HCT116 (cell line): ENCODE measurements at regions of chr14 and their contacts with region 1.

Region 1: DNA sequence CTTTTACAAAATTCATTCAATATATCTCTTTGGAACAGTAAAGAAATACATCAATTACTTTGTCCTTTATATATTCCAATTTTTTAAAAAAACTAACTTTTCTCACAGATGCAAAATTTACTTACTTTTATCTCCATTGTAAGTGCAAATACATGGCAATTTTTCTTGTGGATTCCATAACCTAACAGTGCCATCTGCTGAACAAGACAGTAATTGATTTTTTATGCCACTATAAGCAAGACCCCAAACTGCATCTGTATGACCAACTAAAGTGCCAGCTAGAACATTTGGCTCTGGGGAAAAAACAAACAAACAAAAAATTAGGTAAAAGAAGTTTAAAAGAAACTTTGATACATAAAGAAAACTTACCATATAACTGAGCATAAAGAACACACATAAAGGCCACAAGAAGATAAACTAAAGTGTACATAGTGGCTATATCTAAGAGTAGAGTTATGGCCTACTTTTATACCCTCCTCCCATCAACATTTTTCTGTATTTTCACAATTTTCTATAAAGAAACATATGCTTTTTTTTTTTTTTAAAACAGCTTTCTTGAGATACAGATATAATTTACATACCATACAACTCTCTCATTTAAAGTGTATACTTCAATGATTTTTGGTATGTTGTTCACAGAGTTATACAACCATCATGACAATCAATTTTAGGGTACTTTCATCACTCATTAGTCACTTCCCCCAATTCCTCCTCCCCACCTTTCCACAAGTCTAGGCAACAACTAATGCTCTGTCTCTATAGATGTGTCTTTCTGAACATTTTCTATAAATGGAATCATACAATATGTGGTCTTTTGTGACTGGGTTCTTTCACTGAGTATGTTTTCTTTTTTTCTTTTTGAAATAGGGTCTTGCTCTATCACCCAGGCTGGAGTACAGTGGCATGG is 32.6 kb downstream of the COCH start:
- DNase-seq: peak; percentile 12
- ATAC-seq: no peak
- H3K4me3 ChIP-seq: no peak overlapping the region
- H3K27ac ChIP-seq: no peak overlapping the region
- H3K4me1 ChIP-seq: no peaks in the 10 kb centered on the region
- H3K27me3 ChIP-seq: no peaks in the 10 kb centered on the region
- CTCF ChIP-seq: peak; percentile 5 to 55 (median 27); a peak in 4 of 6 replicates
- POLR2A ChIP-seq: no peak
- RAD21 ChIP-seq: peak; percentile 41; the same call in 1 of the 2 replicates

Region 2: DNA sequence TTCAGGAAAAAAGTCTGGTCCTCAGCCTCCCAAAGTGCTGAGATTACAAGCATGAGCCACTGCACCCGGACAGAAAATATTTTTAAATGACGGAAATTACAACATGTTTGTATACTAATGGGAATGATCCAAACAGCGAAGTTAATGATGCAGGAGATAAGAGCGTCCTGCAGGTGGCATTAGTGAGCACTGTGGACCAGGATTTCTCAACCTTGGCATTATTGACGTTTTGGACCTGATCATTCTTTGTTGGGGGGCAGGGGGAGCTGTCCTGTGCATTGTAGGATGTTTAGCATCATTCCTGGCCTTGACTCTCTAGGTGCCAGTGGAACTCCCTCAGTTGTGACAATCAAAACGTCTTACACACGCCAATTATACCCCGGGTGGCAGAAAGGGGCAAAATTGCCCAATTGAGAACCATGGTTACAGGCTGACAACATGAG is 250.8 kb before region 1 on chr14:
- CTCF ChIA-PET with region 1: no interaction called
- POLR2A ChIA-PET with region 1: no interaction called
- RAD21 ChIA-PET with region 1: interaction called in 1 of 2 experiments, 4 read pairs
- intact Hi-C with region 1: loop called (anchors 1 kb)
- DNase-seq: peak; percentile 15
- ATAC-seq: peak; percentile 82
- H3K4me3 ChIP-seq: no peak overlapping the region
- H3K27ac ChIP-seq: no peak overlapping the region
- H3K4me1 ChIP-seq: no peaks in the 10 kb centered on the region
- H3K27me3 ChIP-seq: no peaks in the 10 kb centered on the region
- CTCF ChIP-seq: peak; percentile 37 to 85 (median 80); a peak in 5 of 6 replicates
- POLR2A ChIP-seq: no peak
- RAD21 ChIP-seq: peak; percentile 40; the same call in 1 of the 2 replicates

Region 3: GRCh38 chr14:30966415-30967363 is 59.7 kb after region 1 on chr14:
- CTCF ChIA-PET with region 1: no interaction called
- POLR2A ChIA-PET with region 1: no interaction called
- RAD21 ChIA-PET with region 1: no interaction called
- intact Hi-C with region 1: no loop called
- DNase-seq: peak; percentile 86
- ATAC-seq: peak; percentile 86
- H3K4me3 ChIP-seq: peak overlapping the region; percentile 61 to 69
- H3K27ac ChIP-seq: peak overlapping the region; percentile 88
- H3K4me1 ChIP-seq: peaks cover 44 to 93% of the 10 kb centered on the region in 2 experiments
- H3K27me3 ChIP-seq: no peaks in the 10 kb centered on the region
- CTCF ChIP-seq: no peak
- POLR2A ChIP-seq: no peak
- RAD21 ChIP-seq: no peak